ENCODE measurements at regions of chr19 and their contacts with region 1.

Region 1: DNA sequence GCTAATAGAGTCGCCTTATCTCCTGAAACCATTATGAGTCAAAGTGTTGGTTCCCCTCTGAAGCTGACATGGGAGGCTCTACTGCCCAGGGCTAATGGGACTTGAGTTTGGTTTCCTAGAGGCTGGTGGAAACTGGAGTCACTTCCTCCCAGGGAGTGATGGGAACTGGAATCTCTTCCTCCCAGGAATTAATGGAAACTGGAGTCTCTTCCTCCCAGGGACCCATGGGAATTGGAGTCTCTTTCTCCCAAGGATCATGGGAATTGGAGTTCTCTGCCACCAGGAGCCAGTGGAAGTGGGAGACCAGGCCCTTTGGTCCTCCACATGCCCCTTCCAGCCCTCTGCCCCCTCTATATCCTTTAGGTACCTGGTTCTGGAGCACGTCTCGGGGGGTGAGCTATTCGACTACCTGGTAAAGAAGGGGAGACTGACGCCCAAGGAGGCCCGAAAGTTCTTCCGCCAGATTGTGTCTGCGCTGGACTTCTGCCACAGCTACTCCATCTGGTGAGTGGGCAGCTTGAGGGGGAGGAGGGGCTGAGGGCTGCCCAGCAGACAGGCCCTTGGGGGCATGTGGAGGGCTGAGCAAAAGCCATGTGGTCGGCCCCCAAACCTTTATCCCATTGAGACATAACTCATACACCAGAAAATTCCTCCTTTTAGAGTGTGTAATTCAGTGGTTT is 5.5 kb downstream of the BRSK1 start:
- DNase-seq: no peak
- H3K4me3 Mint-ChIP-seq: no peak overlapping the region
- H3K27ac Mint-ChIP-seq: no peak overlapping the region
- H3K4me1 Mint-ChIP-seq: peaks cover 5% of the 10 kb centered on the region
- H3K27me3 Mint-ChIP-seq: no peaks in the 10 kb centered on the region
- CTCF ChIP-seq: no peak

Region 2: GRCh38 chr19:55088543-55089341 is 200.5 kb before region 1 on chr19:
- CTCF ChIA-PET with region 1: no interaction called
- POLR2A ChIA-PET with region 1: no interaction called
- intact Hi-C with region 1: no loop called
- DNase-seq: peak; percentile 69
- H3K4me3 Mint-ChIP-seq: no peak overlapping the region
- H3K27ac Mint-ChIP-seq: no peak overlapping the region
- H3K4me1 Mint-ChIP-seq: peaks cover 10% of the 10 kb centered on the region
- H3K27me3 Mint-ChIP-seq: no peaks in the 10 kb centered on the region
- CTCF ChIP-seq: peak; percentile 82

Region 3: DNA sequence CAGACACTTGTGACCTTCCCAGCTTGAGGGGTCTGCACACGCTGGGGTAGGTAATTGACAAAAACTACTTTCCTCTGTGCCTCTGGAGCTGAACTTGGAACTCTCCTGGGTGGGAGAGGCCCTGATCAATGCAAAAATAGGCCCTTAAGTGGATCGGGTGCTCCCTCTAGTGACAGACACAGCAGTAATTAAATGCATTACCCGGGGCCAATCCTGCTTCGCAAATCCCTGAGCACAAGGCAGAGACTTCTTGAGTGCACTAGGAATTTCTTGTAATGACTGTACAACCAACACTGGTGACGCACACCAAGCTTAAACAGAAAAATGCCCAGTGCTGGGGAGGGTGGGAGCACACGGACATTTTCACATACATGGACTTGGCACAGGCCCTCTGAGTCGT is 128.9 kb after region 1 on chr19:
- CTCF ChIA-PET with region 1: interaction called, 29 read pairs
- POLR2A ChIA-PET with region 1: interaction called, 4 read pairs
- intact Hi-C with region 1: loop called (anchors 1 kb)
- DNase-seq: peak; percentile 86
- H3K4me3 Mint-ChIP-seq: no peak overlapping the region
- H3K27ac Mint-ChIP-seq: no peak overlapping the region
- H3K4me1 Mint-ChIP-seq: no peaks in the 10 kb centered on the region
- H3K27me3 Mint-ChIP-seq: no peaks in the 10 kb centered on the region
- CTCF ChIP-seq: peak; percentile 86

Region 4: DNA sequence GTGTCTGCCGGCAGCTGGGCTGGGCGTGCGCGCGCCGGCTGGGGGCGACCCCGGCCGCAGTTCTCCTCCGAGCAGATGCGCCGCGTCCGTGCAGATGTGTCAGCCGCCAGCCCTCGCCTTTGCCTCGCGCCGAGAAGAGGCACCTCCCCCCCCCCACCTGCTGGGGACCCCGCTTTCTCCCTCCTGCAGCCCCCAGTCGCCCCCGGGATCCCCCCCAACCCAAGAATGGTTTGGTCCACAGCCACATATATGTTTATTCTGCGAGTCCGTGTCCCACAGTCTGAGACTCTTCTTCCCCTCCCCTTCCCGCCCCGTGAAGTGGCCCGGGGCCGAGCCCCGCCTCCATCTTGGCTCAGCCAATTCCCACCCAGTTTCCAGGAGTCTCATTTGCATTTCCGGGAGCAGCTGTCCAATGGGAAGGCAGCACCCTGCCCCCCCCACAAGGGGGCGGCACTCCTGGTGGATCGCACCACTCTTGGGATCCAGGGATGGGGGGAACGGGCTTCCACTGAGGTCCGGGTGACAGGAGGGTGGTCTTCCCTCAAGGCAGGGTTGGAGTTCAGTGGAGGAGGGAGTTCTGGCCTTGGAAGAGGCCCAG is 163.6 kb after region 1 on chr19:
- CTCF ChIA-PET with region 1: interaction called, 12 read pairs
- POLR2A ChIA-PET with region 1: no interaction called
- intact Hi-C with region 1: no loop called
- DNase-seq: peak; percentile 71
- H3K4me3 Mint-ChIP-seq: peak overlapping the region; percentile 4
- H3K27ac Mint-ChIP-seq: no peak overlapping the region
- H3K4me1 Mint-ChIP-seq: no peaks in the 10 kb centered on the region
- H3K27me3 Mint-ChIP-seq: peaks cover 12% of the 10 kb centered on the region
- CTCF ChIP-seq: peak; percentile 8